PC-9 (cell line): ENCODE measurements at regions of chr11 and their contacts with region 1.

Region 1: DNA sequence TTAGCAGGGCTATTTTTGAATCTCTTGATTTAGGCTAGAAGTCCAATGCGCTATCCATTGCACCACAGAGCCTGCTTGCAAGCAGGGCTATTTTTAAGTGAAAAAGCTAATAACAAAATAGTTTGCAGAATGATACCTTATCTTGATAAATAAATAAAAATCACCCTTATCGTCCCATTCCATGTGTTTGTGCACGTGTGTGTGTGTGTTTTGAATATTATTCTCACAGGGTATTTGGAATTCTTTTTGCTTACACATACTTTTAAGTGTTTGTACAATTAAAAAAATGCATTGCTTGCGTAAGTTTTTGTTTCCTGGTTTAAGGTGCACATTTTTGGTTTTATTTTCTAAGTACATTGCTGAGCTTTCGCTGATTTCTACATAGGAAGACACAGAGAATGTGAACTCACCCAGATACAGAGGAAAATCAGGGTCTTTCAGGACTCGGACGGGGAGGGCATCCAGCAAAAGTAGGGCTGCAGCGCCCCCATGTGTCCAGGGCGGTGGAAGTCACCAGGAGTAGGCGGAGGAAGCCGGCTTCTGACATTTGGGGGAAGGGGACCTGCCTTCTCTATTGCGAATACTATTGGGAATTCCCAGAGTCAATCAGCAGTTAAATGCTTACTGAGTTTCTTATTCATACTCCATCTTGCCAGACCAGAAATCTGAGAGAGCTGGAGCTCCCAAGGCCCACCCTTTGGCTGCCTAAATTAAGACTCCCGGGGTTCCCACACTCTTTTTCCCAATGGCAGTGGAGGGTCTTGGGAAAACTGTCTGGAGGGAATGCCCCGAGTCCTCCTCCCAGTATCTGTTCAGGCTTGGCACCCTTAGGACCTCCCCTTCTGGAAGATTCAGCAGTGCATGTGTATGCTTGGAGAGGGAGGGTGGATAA is 27.2 kb downstream of the SLC1A2 start:
- DNase-seq: peak; percentile 86 to 90
- H3K4me3 ChIP-seq: peak overlapping the region; percentile 16; the same call in 1 of the 2 replicates
- H3K27ac ChIP-seq: peak overlapping the region; percentile 72
- H3K4me1 ChIP-seq: peaks cover 49% of the 10 kb centered on the region
- H3K27me3 ChIP-seq: no peaks in the 10 kb centered on the region
- CTCF ChIP-seq: peak; percentile 99

Region 2: GRCh38 chr11:34214961-34215805 is 1177.0 kb before region 1 on chr11:
- CTCF ChIA-PET with region 1: no interaction called
- POLR2A ChIA-PET with region 1: no interaction called
- intact Hi-C with region 1: no loop called
- DNase-seq: peak; percentile 59 to 87
- H3K4me3 ChIP-seq: no peak overlapping the region
- H3K27ac ChIP-seq: peak overlapping the region; percentile 54
- H3K4me1 ChIP-seq: peaks cover 33% of the 10 kb centered on the region
- H3K27me3 ChIP-seq: no peaks in the 10 kb centered on the region
- CTCF ChIP-seq: no peak

Region 3: DNA sequence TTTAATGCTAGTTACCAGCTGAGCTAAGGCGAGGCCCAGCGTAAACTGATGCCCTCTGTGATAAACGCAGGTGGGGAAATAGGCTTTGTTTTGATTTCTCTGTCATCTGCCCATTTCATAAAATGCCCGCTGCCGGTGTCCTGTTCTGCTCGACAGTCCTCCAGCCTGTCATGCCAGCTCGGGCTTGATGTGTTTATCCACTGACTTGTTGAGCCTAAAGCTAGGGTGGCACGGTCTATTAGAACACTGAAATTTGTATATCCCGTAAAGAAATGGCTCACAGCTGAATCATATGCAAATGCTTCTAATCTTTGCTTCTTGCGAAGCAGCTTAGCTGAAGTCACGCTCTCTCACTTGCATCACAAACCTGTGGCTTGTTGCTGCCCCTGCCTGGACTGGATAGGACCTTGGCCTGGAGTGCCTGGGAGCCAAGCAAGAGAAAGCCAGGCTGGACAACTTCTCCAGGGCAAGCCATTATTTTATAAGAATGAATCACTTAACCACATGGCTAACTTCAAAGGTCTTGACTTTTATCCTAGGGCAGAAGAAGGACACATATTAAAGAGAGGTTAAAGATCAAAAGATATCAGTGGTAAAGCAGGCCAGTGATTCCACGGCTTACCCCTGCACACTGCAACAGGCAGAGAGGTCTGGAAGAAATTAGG is 738.2 kb before region 1 on chr11:
- CTCF ChIA-PET with region 1: no interaction called
- POLR2A ChIA-PET with region 1: no interaction called
- intact Hi-C with region 1: loop called (anchors 5 kb)
- DNase-seq: peak; percentile 89 to 100
- H3K4me3 ChIP-seq: peak overlapping the region; percentile 16; the same call in 1 of the 2 replicates
- H3K27ac ChIP-seq: peak overlapping the region; percentile 95
- H3K4me1 ChIP-seq: peaks cover 71% of the 10 kb centered on the region
- H3K27me3 ChIP-seq: no peaks in the 10 kb centered on the region
- CTCF ChIP-seq: peak; percentile 20; the same call in 1 of the 2 replicates

Region 4: DNA sequence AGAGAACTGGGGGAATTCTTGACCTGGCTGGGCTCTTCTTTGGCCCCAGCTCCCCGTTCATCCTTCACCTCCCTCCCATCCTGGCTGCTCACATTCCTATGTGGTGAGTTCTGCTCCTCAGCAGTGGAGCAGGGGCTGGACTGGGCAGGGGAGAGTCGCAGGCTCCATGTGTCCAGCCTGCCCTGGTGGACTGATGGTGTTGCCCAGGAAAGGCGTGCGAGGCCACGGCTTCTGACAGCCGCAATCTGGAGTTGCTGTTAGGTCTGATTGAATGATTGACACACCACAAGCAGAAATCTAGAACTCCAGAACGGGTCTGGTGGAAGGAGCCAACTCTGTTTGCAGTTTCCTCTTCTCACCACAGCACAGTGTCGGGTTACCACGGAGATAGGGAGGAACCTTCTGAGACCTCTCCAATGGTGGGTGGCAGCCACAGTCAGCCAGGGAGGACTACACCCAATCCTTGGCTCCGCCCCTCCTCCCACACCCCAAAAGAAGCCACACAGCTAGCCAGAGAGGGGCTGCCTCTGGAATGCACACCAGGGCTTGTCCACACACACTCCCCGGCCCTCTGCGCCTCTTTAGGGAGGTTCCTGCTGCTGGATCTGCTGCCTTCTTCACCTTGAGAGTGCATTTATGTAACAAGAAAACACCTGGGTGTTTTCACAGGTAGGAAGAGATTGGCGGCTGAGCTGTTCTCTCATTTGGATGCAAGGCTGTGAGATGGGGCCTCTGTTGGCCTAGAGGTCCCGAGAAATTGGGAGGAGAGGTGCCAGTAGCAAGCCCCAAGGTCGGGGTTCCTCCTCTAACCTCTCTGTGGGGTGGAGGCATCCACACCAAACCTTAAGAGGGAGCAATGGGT is 309.6 kb before region 1 on chr11:
- CTCF ChIA-PET with region 1: no interaction called
- POLR2A ChIA-PET with region 1: no interaction called
- intact Hi-C with region 1: loop called (anchors 1 kb)
- DNase-seq: peak; percentile 94 to 95
- H3K4me3 ChIP-seq: peak overlapping the region; percentile 39; the same call in 1 of the 2 replicates
- H3K27ac ChIP-seq: peak overlapping the region; percentile 85
- H3K4me1 ChIP-seq: peaks cover 69% of the 10 kb centered on the region
- H3K27me3 ChIP-seq: no peaks in the 10 kb centered on the region
- CTCF ChIP-seq: no peak

Region 5: DNA sequence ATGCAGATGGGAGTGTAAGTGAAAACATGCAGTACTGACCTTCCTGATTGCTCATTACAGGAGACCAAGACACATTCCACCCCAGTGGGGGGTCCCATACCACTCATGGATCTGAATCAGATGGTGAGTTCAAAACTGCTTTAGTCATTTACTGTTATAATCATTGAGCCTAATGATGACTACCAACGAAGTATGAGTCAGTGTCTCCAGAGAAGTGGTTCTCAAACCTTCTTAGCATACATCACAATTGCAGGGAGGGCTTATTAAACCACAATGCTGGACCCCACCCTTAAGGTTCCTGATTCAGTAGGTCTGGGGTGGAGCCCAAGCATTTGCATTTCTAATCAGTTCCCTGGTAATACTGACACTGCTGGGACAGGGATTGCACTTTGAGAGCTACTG is 177.4 kb before region 1 on chr11:
- CTCF ChIA-PET with region 1: no interaction called
- POLR2A ChIA-PET with region 1: no interaction called
- intact Hi-C with region 1: loop called (anchors 5 kb)
- DNase-seq: peak; percentile 58 to 89
- H3K4me3 ChIP-seq: no peak overlapping the region
- H3K27ac ChIP-seq: peak overlapping the region; percentile 64
- H3K4me1 ChIP-seq: peaks cover 67% of the 10 kb centered on the region
- H3K27me3 ChIP-seq: no peaks in the 10 kb centered on the region
- CTCF ChIP-seq: no peak

Region 6: GRCh38 chr11:35363854-35364780 is 28.1 kb before region 1 on chr11:
- CTCF ChIA-PET with region 1: interaction called, 3 read pairs
- POLR2A ChIA-PET with region 1: interaction called, 8 read pairs
- intact Hi-C with region 1: loop called (anchors 1 kb)
- DNase-seq: peak; percentile 89 to 98
- H3K4me3 ChIP-seq: peak overlapping the region; percentile 22; the same call in 1 of the 2 replicates
- H3K27ac ChIP-seq: peak overlapping the region; percentile 84
- H3K4me1 ChIP-seq: peaks cover 40% of the 10 kb centered on the region
- H3K27me3 ChIP-seq: no peaks in the 10 kb centered on the region
- CTCF ChIP-seq: no peak

Region 7: GRCh38 chr11:35605711-35606110 is 213.5 kb after region 1 on chr11:
- CTCF ChIA-PET with region 1: no interaction called
- POLR2A ChIA-PET with region 1: no interaction called
- intact Hi-C with region 1: no loop called
- DNase-seq: no peak
- H3K4me3 ChIP-seq: no peak overlapping the region
- H3K27ac ChIP-seq: no peak overlapping the region
- H3K4me1 ChIP-seq: 0 out of 2 replicates have a peak, but pooled peaks cover 10% of the 10 kb centered on the region
- H3K27me3 ChIP-seq: no peaks in the 10 kb centered on the region
- CTCF ChIP-seq: no peak

Region 8: GRCh38 chr11:36265793-36266628 is 873.8 kb after region 1 on chr11:
- CTCF ChIA-PET with region 1: no interaction called
- POLR2A ChIA-PET with region 1: no interaction called
- intact Hi-C with region 1: loop called (anchors 1 kb)
- DNase-seq: peak; percentile 46 to 63
- H3K4me3 ChIP-seq: no peak overlapping the region
- H3K27ac ChIP-seq: no peak overlapping the region
- H3K4me1 ChIP-seq: no peaks in the 10 kb centered on the region
- H3K27me3 ChIP-seq: no peaks in the 10 kb centered on the region
- CTCF ChIP-seq: peak; percentile 97